ENCODE measurements at regions of chr6 and their contacts with region 1.

Region 1: DNA sequence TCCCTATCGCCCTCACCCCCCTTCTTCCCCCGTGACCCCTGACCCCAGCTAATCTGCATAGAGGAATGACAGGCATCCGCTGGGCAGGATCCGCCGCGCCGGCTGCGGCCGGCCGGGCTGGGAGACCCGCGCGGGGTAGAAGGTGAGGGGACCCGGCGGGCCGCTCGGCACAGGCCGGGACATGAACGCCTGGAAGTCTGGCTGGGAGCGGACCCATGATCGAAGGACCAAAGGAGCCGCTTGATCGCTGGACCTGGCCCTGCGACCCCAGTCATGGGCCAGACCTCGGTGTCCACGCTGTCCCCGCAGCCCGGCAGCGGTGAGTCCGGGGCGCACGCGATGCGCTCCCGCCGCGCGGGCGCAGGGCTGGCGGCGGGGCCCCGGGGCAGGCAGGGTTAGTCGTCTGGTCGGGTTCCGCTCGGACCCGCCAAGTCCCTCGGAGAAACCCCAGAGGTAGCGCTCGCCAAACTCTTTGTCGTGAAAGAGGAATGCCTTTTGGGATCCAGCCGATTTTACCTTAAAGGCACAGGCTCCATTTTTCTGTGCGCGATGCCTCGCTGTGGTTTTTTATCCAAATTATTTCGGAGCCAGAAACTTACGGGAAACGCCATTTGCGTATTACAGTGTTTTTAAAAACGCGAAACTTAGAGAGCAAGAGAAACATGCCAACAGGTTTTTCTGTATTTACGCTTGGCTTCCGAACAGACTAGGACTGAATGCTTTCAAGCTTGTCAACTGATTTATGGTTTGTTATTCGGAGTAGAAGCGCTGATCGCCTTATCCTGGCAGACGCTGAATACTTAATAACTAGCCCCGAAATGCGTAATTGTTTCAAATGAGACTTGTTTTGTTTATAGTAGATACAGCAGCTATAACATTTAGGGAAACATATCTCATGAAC is at the start of gene PHACTR2:
- DNase-seq: peak; percentile 41 to 64
- H3K4me3 ChIP-seq: peak within 1 kb of the TSS; percentile 95
- H3K27ac ChIP-seq: peak within 1 kb of the TSS; percentile 92
- H3K4me1 ChIP-seq: peaks cover 66% of the 10 kb centered on the region
- H3K27me3 ChIP-seq: no peaks in the 10 kb centered on the region
- CTCF ChIP-seq: no peak
- total RNA-seq, gene PHACTR2: 32.8 and 39.8 TPM in 2 replicates

Region 2: GRCh38 chr6:142013286-142013685 is 1664.9 kb before region 1 on chr6:
- CTCF ChIA-PET with region 1: no interaction called
- POLR2A ChIA-PET with region 1: no interaction called
- intact Hi-C with region 1: loop called (anchors 10 kb)
- DNase-seq: peak in 1 of 2 experiments; percentile 87
- H3K4me3 ChIP-seq: no peak overlapping the region
- H3K27ac ChIP-seq: peak overlapping the region; percentile 72
- H3K4me1 ChIP-seq: peaks cover 33% of the 10 kb centered on the region
- H3K27me3 ChIP-seq: no peaks in the 10 kb centered on the region
- CTCF ChIP-seq: no peak

Region 3: GRCh38 chr6:142378138-142378875 is 1299.8 kb before region 1 on chr6:
- CTCF ChIA-PET with region 1: no interaction called
- POLR2A ChIA-PET with region 1: no interaction called
- intact Hi-C with region 1: loop called (anchors 10 kb)
- DNase-seq: peak; percentile 34 to 63
- H3K4me3 ChIP-seq: no peak overlapping the region
- H3K27ac ChIP-seq: peak overlapping the region; percentile 8; the same call in 1 of the 2 replicates
- H3K4me1 ChIP-seq: peaks cover 49% of the 10 kb centered on the region
- H3K27me3 ChIP-seq: no peaks in the 10 kb centered on the region
- CTCF ChIP-seq: no peak

Region 4: DNA sequence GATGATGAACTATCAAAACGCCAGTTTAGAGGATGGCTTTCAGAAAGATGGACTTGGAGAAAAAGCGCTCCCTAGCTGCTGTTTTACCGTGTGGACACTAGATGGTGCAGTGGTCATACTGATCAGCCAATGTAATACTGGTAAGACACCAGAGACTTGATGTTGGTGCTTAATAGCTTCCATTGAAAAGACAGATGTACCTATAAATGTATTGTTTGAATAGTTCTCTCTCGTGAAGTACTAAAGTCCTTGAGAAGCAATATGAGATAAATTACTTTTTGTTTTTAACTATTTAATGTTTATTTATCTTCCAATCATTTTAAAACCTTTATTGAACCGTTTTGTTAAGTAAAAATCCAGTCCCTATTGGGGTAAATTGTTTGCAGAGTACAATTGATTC is 102.7 kb before region 1 on chr6:
- CTCF ChIA-PET with region 1: no interaction called
- POLR2A ChIA-PET with region 1: no interaction called
- intact Hi-C with region 1: loop called (anchors 2 kb)
- DNase-seq: peak; percentile 48 to 56
- H3K4me3 ChIP-seq: no peak overlapping the region
- H3K27ac ChIP-seq: no peak overlapping the region
- H3K4me1 ChIP-seq: no peaks in the 10 kb centered on the region
- H3K27me3 ChIP-seq: no peaks in the 10 kb centered on the region
- CTCF ChIP-seq: peak; percentile 93

Region 5: GRCh38 chr6:143652841-143653331 is 25.3 kb before region 1 on chr6:
- CTCF ChIA-PET with region 1: no interaction called
- POLR2A ChIA-PET with region 1: no interaction called
- intact Hi-C with region 1: no loop called
- DNase-seq: no peak
- H3K4me3 ChIP-seq: no peak overlapping the region
- H3K27ac ChIP-seq: no peak overlapping the region
- H3K4me1 ChIP-seq: no peaks in the 10 kb centered on the region
- H3K27me3 ChIP-seq: no peaks in the 10 kb centered on the region
- CTCF ChIP-seq: no peak

Region 6: GRCh38 chr6:143698759-143699429 is 20.8 kb after region 1 on chr6:
- CTCF ChIA-PET with region 1: no interaction called
- POLR2A ChIA-PET with region 1: no interaction called
- intact Hi-C with region 1: no loop called
- DNase-seq: no peak
- H3K4me3 ChIP-seq: no peak overlapping the region
- H3K27ac ChIP-seq: no peak overlapping the region
- H3K4me1 ChIP-seq: peaks cover 10% of the 10 kb centered on the region; the same call in 1 of the 2 replicates
- H3K27me3 ChIP-seq: no peaks in the 10 kb centered on the region
- CTCF ChIP-seq: no peak

Region 7: DNA sequence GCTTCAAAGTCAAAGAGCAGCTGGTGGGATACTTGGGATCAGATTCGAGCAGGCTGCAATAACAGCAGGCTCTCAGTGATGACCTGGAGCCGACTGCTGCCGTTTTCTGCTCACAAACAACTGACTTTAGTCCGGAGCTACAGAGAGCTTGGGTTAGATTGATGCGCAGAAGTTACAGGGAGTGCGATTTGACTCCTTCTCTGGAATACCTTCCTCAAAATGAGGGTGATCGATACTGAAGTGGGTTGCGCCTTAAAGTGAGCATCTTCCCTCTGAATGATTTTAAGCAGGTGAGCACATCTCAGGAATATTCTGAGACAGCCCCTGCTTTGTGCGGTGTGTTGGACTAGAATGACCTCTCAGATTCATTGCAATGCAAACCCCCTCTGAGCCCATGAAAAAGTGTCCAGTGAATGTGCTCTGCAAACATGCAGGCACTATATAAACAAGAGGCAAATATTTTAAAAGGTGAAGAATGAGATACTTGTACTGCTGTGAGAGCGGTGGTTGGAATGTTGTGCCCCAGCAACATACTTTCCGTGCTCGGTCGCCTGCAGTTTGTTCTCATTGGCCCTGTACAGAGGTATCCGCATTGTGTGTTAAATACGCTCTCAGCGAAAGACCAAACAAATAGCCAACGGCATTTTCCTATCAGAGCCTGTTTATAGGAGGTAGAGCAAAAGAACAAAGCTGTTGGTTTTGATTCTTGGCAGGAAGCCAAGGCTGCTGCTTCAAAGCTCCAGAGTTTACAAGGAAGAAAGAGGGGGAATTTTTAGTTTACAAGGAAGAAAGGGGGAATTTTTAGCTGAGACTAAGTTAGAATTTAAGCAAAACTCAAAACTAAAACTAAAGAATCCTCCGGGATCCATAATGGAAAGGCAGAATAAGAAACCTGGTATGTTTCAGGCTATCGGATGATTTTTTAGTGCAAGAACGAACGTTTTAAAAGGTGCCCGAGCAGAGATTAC is 67.3 kb after region 1 on chr6:
- CTCF ChIA-PET with region 1: no interaction called
- POLR2A ChIA-PET with region 1: no interaction called
- intact Hi-C with region 1: loop called (anchors 1 kb)
- DNase-seq: peak; percentile 78 to 80
- H3K4me3 ChIP-seq: peak overlapping the region; percentile 17; the same call in 1 of the 2 replicates
- H3K27ac ChIP-seq: peak overlapping the region; percentile 54
- H3K4me1 ChIP-seq: peaks cover 32% of the 10 kb centered on the region
- H3K27me3 ChIP-seq: no peaks in the 10 kb centered on the region
- CTCF ChIP-seq: no peak

Region 8: DNA sequence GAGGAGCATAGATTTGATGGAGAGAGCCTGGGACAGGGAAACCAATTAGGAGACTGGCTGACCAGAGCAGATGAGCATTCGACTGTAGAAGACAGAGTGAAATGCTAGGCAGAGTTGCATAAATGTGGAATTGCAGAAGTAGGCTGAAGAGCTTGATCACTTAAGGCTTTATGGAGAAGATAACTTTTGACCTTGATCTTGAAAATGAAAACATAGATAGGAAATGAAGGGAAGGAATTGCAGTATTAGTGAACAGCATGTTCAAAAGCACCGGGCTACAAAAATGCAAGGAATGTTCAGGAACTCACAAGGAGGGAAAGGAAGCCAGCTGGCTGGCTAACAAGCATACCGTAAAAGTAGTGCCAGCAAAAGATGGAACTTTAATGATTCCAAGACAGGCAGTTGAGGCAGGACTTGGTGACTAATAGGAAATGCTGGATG is 144.5 kb after region 1 on chr6:
- CTCF ChIA-PET with region 1: no interaction called
- POLR2A ChIA-PET with region 1: no interaction called
- intact Hi-C with region 1: no loop called
- DNase-seq: no peak
- H3K4me3 ChIP-seq: no peak overlapping the region
- H3K27ac ChIP-seq: no peak overlapping the region
- H3K4me1 ChIP-seq: no peaks in the 10 kb centered on the region
- H3K27me3 ChIP-seq: no peaks in the 10 kb centered on the region
- CTCF ChIP-seq: no peak

Region 9: DNA sequence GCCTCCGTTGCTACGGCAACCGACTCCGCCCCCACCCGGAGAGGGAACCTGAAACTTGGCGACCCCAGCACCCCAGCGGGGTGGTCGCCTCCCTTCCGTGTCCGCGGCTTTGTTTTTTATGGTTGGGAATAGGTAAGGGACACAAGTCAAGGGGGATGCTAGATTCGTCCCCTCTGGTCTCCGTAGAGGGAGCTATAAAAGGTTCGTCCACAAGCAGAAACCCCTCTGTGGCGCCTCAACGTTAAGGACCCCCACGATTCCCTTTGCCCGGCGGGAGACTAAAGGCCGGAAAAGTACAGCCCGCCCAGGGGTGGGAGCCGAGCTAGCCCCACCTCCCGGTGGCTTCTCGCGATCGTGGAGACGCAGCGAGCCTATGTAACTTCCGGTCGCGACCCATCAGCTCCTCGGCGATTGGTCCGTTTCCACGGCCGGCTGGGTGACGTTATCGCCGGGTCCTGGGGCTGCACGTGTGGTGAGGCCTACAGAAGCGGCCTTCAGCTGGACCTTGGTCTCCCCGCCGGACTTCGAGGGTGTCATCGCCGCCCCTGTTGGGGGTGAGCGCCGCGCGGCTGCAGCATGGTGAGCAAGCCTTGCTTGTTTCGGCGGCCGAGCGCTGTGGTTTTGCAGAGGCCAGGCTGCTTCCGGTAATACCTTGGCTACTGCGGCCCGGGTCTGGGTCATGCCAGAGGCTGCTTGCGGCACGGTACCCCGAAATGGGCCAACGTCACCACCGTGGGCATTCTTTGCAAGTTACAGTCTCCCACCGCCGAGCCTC is 164.9 kb after region 1 on chr6 and contains the start of gene LTV1:
- CTCF ChIA-PET with region 1: no interaction called
- POLR2A ChIA-PET with region 1: no interaction called
- intact Hi-C with region 1: loop called (anchors 1 kb)
- DNase-seq: peak; percentile 87 to 92
- H3K4me3 ChIP-seq: peak within 1 kb of the TSS; percentile 94
- H3K27ac ChIP-seq: peak within 1 kb of the TSS; percentile 72
- H3K4me1 ChIP-seq: peaks cover 17% of the 10 kb centered on the region; the same call in 1 of the 2 replicates
- H3K27me3 ChIP-seq: no peaks in the 10 kb centered on the region
- CTCF ChIP-seq: no peak
- total RNA-seq, gene LTV1: 15.4 and 18.3 TPM in 2 replicates

Region 10: GRCh38 chr6:144013486-144013909 is 335.4 kb after region 1 on chr6:
- CTCF ChIA-PET with region 1: no interaction called
- POLR2A ChIA-PET with region 1: no interaction called
- intact Hi-C with region 1: loop called (anchors 5 kb)
- DNase-seq: peak; percentile 62 to 63
- H3K4me3 ChIP-seq: no peak overlapping the region
- H3K27ac ChIP-seq: no peak overlapping the region
- H3K4me1 ChIP-seq: no peaks in the 10 kb centered on the region
- H3K27me3 ChIP-seq: peaks cover 4% of the 10 kb centered on the region; the same call in 1 of the 2 replicates
- CTCF ChIP-seq: peak; percentile 88

Region 11: GRCh38 chr6:144482142-144482541 is 804.0 kb after region 1 on chr6:
- CTCF ChIA-PET with region 1: no interaction called
- POLR2A ChIA-PET with region 1: no interaction called
- intact Hi-C with region 1: no loop called
- DNase-seq: peak; percentile 60 to 69
- H3K4me3 ChIP-seq: no peak overlapping the region
- H3K27ac ChIP-seq: no peak overlapping the region
- H3K4me1 ChIP-seq: no peaks in the 10 kb centered on the region
- H3K27me3 ChIP-seq: no peaks in the 10 kb centered on the region
- CTCF ChIP-seq: peak; percentile 75

Measured in PC-9 (cell line).